Lower leg skin (tissue), 4 donors: ENCODE measurements at regions of chr5 and their contacts with region 1.

Region 1: GRCh38 chr5:17216176-17216973 is 1.1 kb upstream of the BASP1 start:
- DNase-seq: peak; percentile 75 to 95
- H3K4me3 ChIP-seq: peak overlapping the region; percentile 20
- CTCF ChIP-seq: no peak
- POLR2A ChIP-seq: no peak

Region 2: DNA sequence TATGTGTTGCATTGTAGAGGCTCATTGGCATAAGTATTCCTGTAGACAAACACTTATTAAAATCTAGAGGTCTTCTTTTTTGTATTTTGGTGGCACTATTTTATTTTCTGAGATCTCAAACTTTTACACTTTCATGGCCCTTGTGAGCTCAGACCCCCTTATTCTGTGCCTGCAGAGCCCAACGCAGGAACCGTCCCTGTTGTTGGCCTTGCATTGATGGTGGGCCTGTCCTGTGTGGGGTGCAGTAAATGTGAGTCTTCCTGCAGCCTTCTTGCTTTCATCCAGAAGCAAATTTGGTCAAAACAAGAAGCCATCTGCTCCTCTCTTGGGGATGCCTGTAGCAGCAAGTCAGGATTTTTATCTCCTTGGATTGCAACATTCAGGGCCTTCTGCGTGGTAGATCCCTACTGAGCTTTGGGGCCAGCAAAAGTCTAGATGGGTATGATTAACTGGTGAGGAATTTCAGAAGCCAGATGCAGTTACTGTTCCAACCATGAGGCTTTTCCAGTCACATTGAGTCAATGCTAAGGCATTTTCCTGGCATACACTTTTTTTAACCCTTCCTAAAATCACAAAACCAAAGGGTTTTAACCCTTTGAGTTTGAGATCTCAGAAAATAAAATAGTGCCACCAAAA is 32.7 kb after region 1 on chr5:
- intact Hi-C with region 1: no loop called
- DNase-seq: peak in 1 of 2 donors; percentile 60
- H3K4me3 ChIP-seq: no peak overlapping the region
- CTCF ChIP-seq: no peak
- POLR2A ChIP-seq: no peak

Region 3: DNA sequence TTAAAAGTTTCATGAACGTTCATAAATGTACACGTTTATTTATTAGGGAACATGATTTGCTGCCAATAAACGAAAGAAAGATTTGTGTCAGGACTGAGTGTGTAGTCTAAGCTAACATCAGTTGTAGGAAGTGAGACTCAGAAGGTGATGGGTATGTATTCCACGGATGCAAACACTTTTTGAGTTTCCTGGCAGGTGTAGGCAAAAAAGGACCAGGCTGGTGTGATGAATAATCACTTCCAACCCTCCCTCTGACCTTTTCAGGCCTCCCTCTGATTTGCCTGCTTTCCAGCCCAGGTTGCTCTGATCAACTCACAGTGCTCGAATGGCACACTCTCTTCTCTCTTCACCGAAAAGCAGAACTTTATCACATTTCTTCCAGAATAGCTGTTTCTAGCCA is 52.8 kb after region 1 on chr5:
- intact Hi-C with region 1: no loop called
- DNase-seq: no peak
- H3K4me3 ChIP-seq: no peak overlapping the region
- CTCF ChIP-seq: no peak
- POLR2A ChIP-seq: no peak

Region 4: GRCh38 chr5:18281682-18282557 is 1065.5 kb after region 1 on chr5:
- intact Hi-C with region 1: loop called (anchors 10 kb)
- DNase-seq: no peak
- H3K4me3 ChIP-seq: no peak overlapping the region
- CTCF ChIP-seq: no peak
- POLR2A ChIP-seq: no peak

Region 5: GRCh38 chr5:18314192-18314778 is 1097.9 kb after region 1 on chr5:
- intact Hi-C with region 1: loop called (anchors 5 kb)
- DNase-seq: no peak
- H3K4me3 ChIP-seq: no peak overlapping the region
- CTCF ChIP-seq: no peak
- POLR2A ChIP-seq: no peak